GM10248 (cell line): ENCODE measurements at regions of chr6 and their contacts with region 1.

Region 1: DNA sequence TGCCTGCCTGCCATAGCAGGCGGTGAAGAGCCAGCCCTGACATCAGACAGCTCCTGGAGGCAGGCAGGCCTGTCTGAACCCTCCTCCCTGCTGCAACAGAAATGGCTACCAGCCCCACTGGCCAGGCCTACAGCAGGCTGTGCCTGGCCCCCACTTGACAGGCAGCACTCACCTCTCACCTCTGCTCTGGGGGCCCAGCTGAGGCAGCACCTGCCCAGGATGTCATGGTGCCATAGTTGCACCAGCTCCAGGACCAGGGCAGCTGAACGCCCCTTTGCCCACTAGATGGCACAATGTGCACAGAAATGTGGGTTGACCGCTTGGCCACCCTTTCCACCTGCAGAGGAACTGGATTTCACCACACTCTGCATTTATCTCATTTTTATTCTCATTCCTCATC is 30.6 kb downstream of the MRPL14 start:
- DNase-seq: peak; percentile 86
- CTCF ChIP-seq: peak; percentile 87

Region 2: DNA sequence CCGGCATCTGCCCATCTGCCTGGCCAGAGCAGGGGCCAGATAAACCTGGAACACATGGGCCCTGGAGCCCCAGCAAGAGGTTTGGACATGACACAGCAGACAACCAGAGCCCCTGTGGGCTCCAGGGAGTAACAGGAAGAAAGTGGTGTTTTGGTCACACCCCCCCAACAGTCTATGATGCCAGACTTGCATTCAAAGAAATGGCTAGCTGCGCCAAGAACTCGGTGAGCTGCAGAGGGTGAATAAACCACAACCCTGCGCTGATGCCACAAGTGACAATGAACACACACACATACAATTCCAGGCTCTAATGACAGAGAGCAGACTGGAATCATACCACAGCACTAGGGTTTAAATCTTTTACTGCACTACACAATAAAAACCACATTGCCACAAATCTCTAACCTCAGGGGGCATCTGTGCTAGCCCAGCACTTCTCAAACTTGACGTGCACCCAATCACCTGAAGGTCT is 1678.9 kb before region 1 on chr6:
- CTCF ChIA-PET with region 1: no interaction called
- POLR2A ChIA-PET with region 1: no interaction called
- DNase-seq: no peak
- CTCF ChIP-seq: no peak

Region 3: GRCh38 chr6:43984442-43985321 is 111.9 kb before region 1 on chr6:
- CTCF ChIA-PET with region 1: no interaction called
- POLR2A ChIA-PET with region 1: no interaction called
- DNase-seq: no peak
- CTCF ChIP-seq: no peak

Region 4: GRCh38 chr6:44116641-44117382 is 20.2 kb after region 1 on chr6:
- CTCF ChIA-PET with region 1: interaction called, 110 read pairs
- POLR2A ChIA-PET with region 1: no interaction called
- DNase-seq: no peak
- CTCF ChIP-seq: no peak

Region 5: DNA sequence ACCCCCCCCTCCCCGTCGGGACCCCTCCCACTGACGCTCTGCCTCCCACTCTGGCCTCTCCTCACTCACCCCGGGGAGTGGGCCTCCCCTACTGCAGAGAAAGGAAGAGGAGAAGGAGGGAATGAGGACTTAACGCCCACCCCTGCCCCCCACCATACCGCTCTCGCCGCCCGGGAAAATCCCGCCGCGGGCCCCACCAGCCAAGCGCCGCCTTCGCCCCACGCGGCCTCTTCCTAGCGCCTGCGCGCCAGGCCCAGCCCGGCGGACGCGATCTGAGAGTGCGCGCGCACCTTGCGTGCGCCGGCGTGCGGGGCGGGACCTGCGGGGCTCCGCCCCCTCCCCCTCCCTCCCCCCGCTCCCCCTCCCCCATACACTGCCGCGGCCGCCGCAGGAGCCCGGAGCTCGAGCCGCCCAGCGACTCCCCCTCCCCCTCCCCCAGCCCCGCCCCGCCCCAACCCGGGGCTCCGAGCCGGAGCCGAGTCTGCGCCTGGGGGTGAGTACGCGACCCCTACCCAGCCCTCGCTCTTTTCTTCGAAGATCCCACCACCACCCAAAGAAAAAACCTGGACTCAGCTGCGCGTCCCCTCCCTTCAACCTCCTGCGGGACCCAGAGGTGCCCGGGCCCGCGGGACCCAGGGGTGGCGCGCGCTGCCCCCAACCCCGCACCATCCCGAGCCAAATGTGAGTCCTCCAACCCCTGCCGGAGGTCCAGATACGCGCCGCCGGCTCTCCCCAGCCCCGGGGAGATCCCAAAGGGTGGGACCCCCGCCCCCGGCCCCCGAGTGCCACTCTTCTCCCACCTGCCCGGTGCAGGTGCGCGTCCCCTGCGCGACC is 30.8 kb after region 1 on chr6 and contains the starts of genes MRPL14 and TMEM63B:
- CTCF ChIA-PET with region 1: interaction called, 8 read pairs
- POLR2A ChIA-PET with region 1: interaction called, 11 read pairs
- DNase-seq: peak; percentile 99
- CTCF ChIP-seq: no peak

Region 6: GRCh38 chr6:44151348-44152108 is 54.9 kb after region 1 on chr6:
- CTCF ChIA-PET with region 1: interaction called, 37 read pairs
- POLR2A ChIA-PET with region 1: no interaction called
- DNase-seq: peak; percentile 90
- CTCF ChIP-seq: peak; percentile 98

Region 7: GRCh38 chr6:44156494-44157151 is 60.0 kb after region 1 on chr6:
- CTCF ChIA-PET with region 1: interaction called, 37 read pairs
- POLR2A ChIA-PET with region 1: no interaction called
- DNase-seq: no peak
- CTCF ChIP-seq: no peak

Region 8: GRCh38 chr6:44237813-44238433 is 141.3 kb after region 1 on chr6:
- CTCF ChIA-PET with region 1: interaction called, 34 read pairs
- POLR2A ChIA-PET with region 1: interaction called, 9 read pairs
- DNase-seq: peak; percentile 87
- CTCF ChIP-seq: peak; percentile 95